ENCODE measurements at regions of chr16 and their contacts with region 1.

Region 1: DNA sequence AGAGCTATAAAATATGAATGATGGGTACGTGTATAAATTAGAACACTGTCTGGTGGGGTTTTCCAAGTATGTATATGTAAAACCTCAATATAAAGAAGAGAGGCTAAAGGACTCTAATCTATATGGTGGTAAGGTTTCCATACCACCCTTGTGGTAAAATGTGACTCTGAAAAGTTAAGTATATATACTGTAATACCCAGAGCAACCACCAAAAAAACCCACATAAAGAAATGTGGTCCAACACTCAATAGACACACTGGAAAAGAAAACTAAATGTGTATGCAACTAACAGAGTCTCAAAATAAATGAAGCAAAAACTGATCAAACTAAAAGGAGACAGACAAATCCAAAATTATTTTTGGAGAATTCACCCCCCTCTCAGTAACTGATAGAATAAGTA is 72.2 kb downstream of the XPO6 start:
- DNase-seq: no peak
- ATAC-seq: peak; percentile 49; the same call in 1 of the 2 replicates
- H3K4me3 ChIP-seq: no peak overlapping the region
- H3K27ac ChIP-seq: no peak overlapping the region
- H3K4me1 ChIP-seq: no peaks in the 10 kb centered on the region
- H3K27me3 ChIP-seq: no peaks in the 10 kb centered on the region
- CTCF ChIP-seq: peak in 1 of 3 experiments; percentile 31; a peak in 2 of 6 replicates
- POLR2A ChIP-seq: no peak
- RAD21 ChIP-seq: no peak

Region 2: GRCh38 chr16:28126684-28127620 is 12.6 kb before region 1 on chr16:
- CTCF ChIA-PET with region 1: no interaction called
- POLR2A ChIA-PET with region 1: no interaction called
- RAD21 ChIA-PET with region 1: no interaction called
- intact Hi-C with region 1: no loop called
- DNase-seq: no peak
- ATAC-seq: no peak; the same call in 1 of the 2 replicates
- H3K4me3 ChIP-seq: no peak overlapping the region
- H3K27ac ChIP-seq: no peak overlapping the region
- H3K4me1 ChIP-seq: no peaks in the 10 kb centered on the region
- H3K27me3 ChIP-seq: no peaks in the 10 kb centered on the region
- CTCF ChIP-seq: no peak
- POLR2A ChIP-seq: no peak
- RAD21 ChIP-seq: no peak

Region 3: DNA sequence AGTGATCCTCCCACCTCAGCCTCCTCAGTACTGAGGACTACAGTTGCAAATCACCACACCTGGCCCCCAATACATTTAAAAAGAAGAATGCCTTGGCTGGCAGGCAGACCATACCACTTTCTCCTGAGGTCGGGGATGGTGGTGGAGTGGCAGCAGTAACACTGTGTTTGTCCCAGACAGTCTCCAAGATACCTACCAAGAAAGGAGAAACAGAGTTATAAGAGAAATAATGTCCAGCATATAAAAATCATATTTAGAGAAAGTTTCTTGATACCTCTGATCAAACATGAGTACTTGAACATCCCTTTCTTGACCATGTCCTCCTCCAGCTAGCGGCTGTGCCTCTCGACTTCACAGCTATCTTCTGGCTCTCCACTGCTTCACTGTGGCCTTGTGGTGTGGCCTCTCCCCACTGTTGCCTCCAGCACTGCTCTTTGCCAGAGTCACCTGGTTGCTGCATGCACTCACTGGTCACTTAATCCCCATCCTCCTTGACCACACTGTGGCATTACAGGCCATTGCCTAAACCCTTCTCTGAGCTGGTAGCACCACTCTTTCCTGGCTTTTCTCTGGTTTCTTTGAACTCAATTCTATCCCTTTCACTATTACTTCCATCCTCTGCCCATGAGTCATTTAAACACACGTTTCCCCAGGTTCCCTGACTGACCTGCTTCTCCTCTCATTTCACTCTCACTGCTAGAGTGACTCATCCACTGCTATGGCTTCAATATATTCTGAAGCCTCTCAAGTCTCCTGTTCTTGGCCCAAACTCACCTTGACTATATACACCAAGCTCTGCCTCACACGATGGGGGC is 27.1 kb after region 1 on chr16:
- CTCF ChIA-PET with region 1: no interaction called
- POLR2A ChIA-PET with region 1: no interaction called
- RAD21 ChIA-PET with region 1: no interaction called
- intact Hi-C with region 1: no loop called
- DNase-seq: peak; percentile 13
- ATAC-seq: peak; percentile 62
- H3K4me3 ChIP-seq: no peak overlapping the region
- H3K27ac ChIP-seq: 0 out of 2 replicates have a peak overlapping the region, but pooled peaks have one; percentile 15
- H3K4me1 ChIP-seq: peaks cover 0 to 11% of the 10 kb centered on the region in 2 experiments; a peak in 2 of 4 replicates
- H3K27me3 ChIP-seq: no peaks in the 10 kb centered on the region
- CTCF ChIP-seq: no peak
- POLR2A ChIP-seq: no peak
- RAD21 ChIP-seq: 0 out of 2 replicates have a peak, but pooled peaks have one; percentile 10

Region 4: DNA sequence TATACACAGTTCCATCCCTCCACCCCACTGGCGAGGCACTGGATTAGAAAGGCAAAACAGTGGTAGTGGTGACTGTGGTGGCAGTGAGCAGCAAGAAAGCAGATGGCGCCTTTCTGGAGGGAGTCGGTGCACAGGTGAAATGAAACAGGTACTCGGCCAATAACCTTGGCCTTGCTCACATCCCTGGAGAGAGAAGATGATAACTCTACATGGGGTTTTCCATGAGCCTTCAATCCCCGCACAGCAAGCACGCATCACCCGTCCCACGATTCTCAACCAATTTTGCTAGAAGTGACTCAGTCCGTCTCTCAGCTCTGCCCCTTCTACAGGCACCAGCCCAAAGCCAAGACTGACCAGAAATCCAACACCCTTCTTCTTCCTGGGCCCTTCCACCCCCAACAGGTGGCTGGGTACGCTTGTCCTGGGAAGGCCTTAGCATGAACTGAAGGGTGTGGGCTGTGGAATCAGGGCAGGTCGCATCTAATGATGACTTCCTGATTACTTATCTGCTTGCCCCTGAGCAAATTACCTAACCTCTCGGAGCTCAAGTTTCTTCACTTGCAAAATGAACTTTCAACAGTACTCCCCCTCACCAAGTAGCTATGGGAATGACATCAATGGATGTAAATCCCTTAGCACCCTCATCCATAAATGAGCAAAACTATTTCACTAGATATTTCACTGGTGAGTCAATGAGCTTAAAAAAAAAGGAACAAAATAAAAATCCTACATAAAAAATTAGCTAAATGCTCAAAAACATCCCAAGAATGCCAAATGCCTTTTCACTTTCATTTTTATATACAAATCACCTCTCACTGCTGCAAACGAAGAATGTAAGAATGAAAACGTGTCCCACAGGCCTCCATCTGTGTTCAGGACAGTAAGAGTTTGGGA is 54.2 kb after region 1 on chr16:
- CTCF ChIA-PET with region 1: no interaction called
- POLR2A ChIA-PET with region 1: no interaction called
- RAD21 ChIA-PET with region 1: no interaction called
- intact Hi-C with region 1: loop called (anchors 2 kb)
- DNase-seq: no peak
- ATAC-seq: no peak
- H3K4me3 ChIP-seq: no peak overlapping the region
- H3K27ac ChIP-seq: no peak overlapping the region
- H3K4me1 ChIP-seq: peaks cover 2 to 49% of the 10 kb centered on the region in 2 experiments; a peak in 1 of 4 replicates
- H3K27me3 ChIP-seq: no peaks in the 10 kb centered on the region
- CTCF ChIP-seq: no peak
- POLR2A ChIP-seq: no peak
- RAD21 ChIP-seq: no peak